ENCODE measurements at regions of chr20 and their contacts with region 1.

Region 1: DNA sequence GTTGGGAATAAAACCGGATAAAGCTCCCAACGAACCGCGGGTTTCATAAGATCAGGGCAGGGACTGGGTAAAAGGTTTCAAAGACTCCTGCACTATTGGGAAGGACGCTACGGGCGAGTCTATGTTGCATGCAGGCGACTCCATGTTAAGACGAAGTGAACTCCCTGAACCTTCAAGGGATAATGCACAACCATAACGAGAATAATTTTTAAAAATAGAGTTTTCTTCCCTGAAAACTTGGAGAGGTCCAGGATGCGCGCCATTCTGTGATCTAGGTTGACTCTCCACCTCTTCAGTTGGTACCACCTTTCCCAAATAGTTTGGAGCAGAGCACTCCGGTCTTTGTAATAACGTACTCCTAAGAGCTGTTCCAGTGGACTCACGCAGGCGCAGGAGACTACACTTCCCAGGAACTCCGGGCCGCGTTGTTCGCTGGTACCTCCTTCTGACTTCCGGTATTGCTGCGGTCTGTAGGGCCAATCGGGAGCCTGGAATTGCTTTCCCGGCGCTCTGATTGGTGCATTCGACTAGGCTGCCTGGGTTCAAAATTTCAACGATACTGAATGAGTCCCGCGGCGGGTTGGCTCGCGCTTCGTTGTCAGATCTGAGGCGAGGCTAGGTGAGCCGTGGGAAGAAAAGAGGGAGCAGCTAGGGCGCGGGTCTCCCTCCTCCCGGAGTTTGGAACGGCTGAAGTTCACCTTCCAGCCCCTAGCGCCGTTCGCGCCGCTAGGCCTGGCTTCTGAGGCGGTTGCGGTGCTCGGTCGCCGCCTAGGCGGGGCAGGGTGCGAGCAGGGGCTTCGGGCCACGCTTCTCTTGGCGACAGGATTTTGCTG is at the start of gene TPX2:
- DNase-seq: peak; percentile 95
- H3K4me3 Mint-ChIP-seq: no peak within 1 kb of the TSS
- H3K27ac Mint-ChIP-seq: no peak within 1 kb of the TSS
- H3K4me1 Mint-ChIP-seq: peaks cover 4% of the 10 kb centered on the region
- H3K27me3 Mint-ChIP-seq: no peaks in the 10 kb centered on the region
- total RNA-seq, gene TPX2: 166 to 175 TPM

Region 2: GRCh38 chr20:31547017-31547675 is 191.8 kb before region 1 on chr20:
- CTCF ChIA-PET with region 1: no interaction called
- intact Hi-C with region 1: no loop called
- DNase-seq: peak; percentile 89
- H3K4me3 Mint-ChIP-seq: peak overlapping the region; percentile 92
- H3K27ac Mint-ChIP-seq: peak overlapping the region; percentile 97
- H3K4me1 Mint-ChIP-seq: peaks cover 25% of the 10 kb centered on the region
- H3K27me3 Mint-ChIP-seq: no peaks in the 10 kb centered on the region

Region 3: DNA sequence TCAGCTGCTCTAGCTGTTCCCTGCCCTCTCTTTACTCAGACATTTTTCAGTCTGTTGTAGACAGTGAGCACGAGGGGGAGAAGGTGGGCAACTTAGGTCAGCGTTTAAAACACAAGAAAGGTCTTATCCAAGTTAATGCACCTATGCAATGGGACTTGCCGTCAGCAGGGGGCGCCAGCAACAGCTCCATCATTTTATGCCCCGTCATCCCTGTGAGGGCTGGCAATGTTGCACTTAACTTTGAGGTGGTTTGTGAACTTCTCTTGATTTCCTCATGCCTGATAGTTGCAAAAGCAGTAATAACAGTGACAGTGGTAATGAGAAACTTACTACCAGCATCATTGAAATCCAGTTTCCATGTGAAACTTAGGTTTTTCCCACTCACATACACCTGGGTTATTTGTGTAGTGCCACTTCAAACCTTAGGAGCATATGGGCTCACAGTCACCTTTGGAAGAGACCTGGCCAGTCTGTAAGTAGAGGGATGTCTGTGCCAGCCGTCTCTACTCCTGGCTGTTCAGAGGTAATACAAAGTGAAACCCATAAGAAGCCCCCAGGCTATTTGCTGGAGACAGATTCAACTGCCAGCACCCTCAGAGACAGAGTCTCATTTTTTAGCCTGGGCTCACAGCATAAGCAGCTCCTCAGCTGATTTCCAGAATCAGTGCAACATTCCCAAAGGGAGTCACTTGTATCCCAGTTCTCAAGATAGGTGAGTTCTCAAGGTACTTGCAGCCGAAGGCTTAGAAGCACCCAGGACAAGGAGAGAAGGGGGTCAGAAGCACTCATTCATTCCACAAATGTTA is 178.6 kb before region 1 on chr20:
- CTCF ChIA-PET with region 1: no interaction called
- intact Hi-C with region 1: loop called (anchors 5 kb)
- DNase-seq: peak; percentile 92
- H3K4me3 Mint-ChIP-seq: no peak overlapping the region
- H3K27ac Mint-ChIP-seq: peak overlapping the region; percentile 61
- H3K4me1 Mint-ChIP-seq: peaks cover 13% of the 10 kb centered on the region
- H3K27me3 Mint-ChIP-seq: no peaks in the 10 kb centered on the region

Region 4: DNA sequence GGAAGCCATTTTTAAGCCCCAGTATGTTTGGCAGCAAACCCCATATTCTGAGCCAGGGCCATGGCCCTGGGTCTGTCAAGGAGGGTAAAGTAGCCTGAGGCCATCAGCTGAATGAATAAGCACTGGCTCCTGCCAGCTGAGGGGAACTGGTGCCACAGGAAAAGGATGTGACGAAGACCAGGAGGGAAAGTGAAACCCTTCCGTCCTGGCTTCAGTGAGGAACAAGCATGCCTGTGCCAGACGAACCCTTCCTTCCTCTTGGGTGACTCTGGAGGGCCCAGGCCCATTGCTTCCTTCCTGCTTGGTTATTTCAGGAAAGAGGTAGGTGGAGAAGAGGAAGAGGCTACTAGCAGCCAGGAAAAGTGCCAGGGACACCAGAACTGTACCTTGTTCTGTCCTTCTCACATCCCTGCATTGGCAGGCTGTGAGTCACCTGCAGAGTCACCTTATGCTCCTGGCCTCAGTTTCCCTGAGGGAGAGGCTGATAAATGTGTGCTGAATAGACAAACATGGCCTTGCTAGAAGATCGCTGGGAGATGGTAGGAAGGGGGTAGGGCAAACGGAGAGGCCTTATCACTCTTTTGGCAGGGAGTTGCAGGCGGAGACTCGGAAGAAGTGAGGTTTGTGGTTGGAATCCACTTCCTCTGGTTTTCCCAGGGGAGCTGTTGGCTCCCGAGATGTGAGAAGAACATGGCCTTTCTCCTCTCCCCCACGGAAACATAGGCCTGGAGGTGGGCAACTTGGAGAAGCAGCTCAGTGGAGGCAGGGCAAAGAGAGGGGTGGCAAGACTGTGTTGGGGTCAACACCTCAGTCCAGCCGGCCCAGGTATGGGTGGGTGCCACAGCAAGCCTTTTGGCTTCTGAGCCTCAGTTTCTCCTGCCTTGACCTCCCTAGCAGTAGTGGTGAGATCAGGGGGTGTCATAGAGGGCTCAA is 63.8 kb before region 1 on chr20:
- CTCF ChIA-PET with region 1: interaction called, 3 read pairs
- intact Hi-C with region 1: loop called (anchors 1 kb)
- DNase-seq: peak; percentile 86
- H3K4me3 Mint-ChIP-seq: peak overlapping the region; percentile 84
- H3K27ac Mint-ChIP-seq: peak overlapping the region; percentile 97
- H3K4me1 Mint-ChIP-seq: peaks cover 79% of the 10 kb centered on the region
- H3K27me3 Mint-ChIP-seq: no peaks in the 10 kb centered on the region

Region 5: GRCh38 chr20:31717478-31718201 is 21.3 kb before region 1 on chr20:
- CTCF ChIA-PET with region 1: no interaction called
- intact Hi-C with region 1: loop called (anchors 1 kb)
- DNase-seq: peak; percentile 42
- H3K4me3 Mint-ChIP-seq: peak overlapping the region; percentile 95
- H3K27ac Mint-ChIP-seq: peak overlapping the region; percentile 99
- H3K4me1 Mint-ChIP-seq: peaks cover 53% of the 10 kb centered on the region
- H3K27me3 Mint-ChIP-seq: no peaks in the 10 kb centered on the region

Region 6: GRCh38 chr20:31760519-31761240 is 21.7 kb after region 1 on chr20:
- CTCF ChIA-PET with region 1: no interaction called
- intact Hi-C with region 1: no loop called
- DNase-seq: no peak
- H3K4me3 Mint-ChIP-seq: no peak overlapping the region
- H3K27ac Mint-ChIP-seq: no peak overlapping the region
- H3K4me1 Mint-ChIP-seq: no peaks in the 10 kb centered on the region
- H3K27me3 Mint-ChIP-seq: no peaks in the 10 kb centered on the region

Region 7: DNA sequence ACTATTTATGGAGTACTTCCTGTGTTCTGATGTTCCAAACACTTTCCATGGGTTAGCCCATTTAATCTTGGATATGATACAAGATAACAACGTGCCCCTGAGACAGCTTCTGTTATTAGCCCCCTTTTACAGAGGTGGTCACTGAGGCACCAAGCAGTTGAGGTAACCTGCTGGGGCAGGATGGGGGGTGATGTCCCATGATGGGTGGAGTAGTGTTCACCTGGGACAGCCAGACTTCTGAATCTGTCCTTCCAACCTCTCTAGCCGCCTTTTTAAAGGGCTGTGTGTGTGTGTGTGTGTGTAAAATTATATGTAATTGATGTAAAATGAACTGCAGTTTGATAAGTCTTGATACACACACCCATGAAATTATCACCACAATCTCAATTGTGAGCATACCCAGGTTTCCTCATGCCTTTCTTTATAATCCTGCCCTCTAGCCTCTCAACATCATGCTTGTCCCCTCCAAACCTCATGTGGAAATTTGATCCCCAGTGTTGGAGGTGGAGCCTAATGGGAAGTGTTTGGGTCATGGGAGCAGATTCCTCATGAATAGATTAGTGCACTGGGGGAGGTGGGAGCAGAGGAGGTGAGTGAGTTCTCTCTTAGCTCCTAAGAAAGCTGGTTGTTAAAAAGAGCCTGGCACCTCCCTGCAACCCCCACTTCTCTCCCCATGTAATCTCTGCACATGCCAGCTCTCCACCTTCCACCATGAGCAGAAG is 429.4 kb after region 1 on chr20:
- CTCF ChIA-PET with region 1: no interaction called
- intact Hi-C with region 1: no loop called
- DNase-seq: no peak
- H3K4me3 Mint-ChIP-seq: no peak overlapping the region
- H3K27ac Mint-ChIP-seq: no peak overlapping the region
- H3K4me1 Mint-ChIP-seq: no peaks in the 10 kb centered on the region
- H3K27me3 Mint-ChIP-seq: no peaks in the 10 kb centered on the region